ENCODE measurements at regions of chr6 and their contacts with region 1.

Region 1: DNA sequence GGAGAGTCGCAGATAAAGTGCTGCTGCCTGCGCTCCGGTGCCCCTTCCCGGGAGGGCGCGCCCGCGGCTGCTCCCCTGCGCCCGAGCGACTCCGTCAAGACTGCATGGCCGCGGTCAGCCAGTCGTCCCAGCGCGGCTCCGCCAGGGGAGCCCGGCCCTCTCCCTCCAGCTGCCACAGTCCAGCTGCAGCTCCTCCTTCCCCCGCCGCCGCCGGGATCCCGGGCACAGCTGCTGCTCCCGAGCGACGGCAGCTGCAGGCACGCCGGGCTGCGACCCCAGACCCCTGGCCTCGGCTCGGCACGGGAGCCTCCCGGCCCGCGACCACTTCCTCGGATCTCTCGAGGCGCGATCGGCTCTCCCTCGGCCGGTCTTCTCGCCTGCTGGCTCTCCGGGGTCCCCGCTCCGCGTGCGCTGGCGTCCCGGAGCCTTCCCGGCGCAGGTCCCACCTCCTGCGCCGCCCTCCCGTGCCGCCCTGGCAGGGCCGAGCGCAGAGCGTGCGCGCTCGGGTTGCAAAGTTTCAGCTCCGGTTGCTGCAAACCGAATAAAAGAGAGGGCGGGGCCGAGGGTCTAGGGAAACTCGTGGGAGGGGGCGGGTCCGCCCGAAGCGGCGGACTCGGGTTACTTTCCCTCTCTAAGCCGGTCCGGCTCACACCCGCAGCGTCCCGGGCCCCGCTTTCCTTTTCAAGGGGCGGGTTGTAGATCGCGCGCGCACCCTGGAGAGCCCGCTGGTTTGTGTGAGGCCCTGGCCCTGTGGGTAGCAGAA is at the start of gene CNKSR3:
- DNase-seq: peak; percentile 92 to 95
- H3K4me3 ChIP-seq: peak within 1 kb of the TSS; percentile 96
- H3K4me3 Mint-ChIP-seq: peak within 1 kb of the TSS; percentile 93
- H3K27ac Mint-ChIP-seq: peak within 1 kb of the TSS; percentile 86
- H3K4me1 ChIP-seq: peaks cover 42% of the 10 kb centered on the region
- H3K4me1 Mint-ChIP-seq: peaks cover 37% of the 10 kb centered on the region
- H3K27me3 ChIP-seq: no peaks in the 10 kb centered on the region
- H3K27me3 Mint-ChIP-seq: no peaks in the 10 kb centered on the region
- CTCF ChIP-seq: no peak
- total RNA-seq, gene CNKSR3: 31.8 and 33.1 TPM in 2 replicates

Region 2: GRCh38 chr6:154370545-154370944 is 139.8 kb before region 1 on chr6:
- CTCF ChIA-PET with region 1: no interaction called
- POLR2A ChIA-PET with region 1: no interaction called
- intact Hi-C with region 1: loop called (anchors 5 kb)
- DNase-seq: peak in 1 of 2 experiments; percentile 35
- H3K4me3 ChIP-seq: no peak overlapping the region
- H3K4me3 Mint-ChIP-seq: no peak overlapping the region
- H3K27ac Mint-ChIP-seq: no peak overlapping the region
- H3K4me1 ChIP-seq: peaks cover 22% of the 10 kb centered on the region
- H3K4me1 Mint-ChIP-seq: peaks cover 20% of the 10 kb centered on the region
- H3K27me3 ChIP-seq: no peaks in the 10 kb centered on the region
- H3K27me3 Mint-ChIP-seq: no peaks in the 10 kb centered on the region
- CTCF ChIP-seq: peak in 1 of 2 experiments; percentile 62

Region 3: GRCh38 chr6:154410619-154411072 is 99.7 kb before region 1 on chr6:
- CTCF ChIA-PET with region 1: no interaction called
- POLR2A ChIA-PET with region 1: no interaction called
- intact Hi-C with region 1: no loop called
- DNase-seq: no peak
- H3K4me3 ChIP-seq: no peak overlapping the region
- H3K4me3 Mint-ChIP-seq: no peak overlapping the region
- H3K27ac Mint-ChIP-seq: no peak overlapping the region
- H3K4me1 ChIP-seq: 0 out of 2 replicates have a peak, but pooled peaks cover 4% of the 10 kb centered on the region
- H3K4me1 Mint-ChIP-seq: no peaks in the 10 kb centered on the region
- H3K27me3 ChIP-seq: no peaks in the 10 kb centered on the region
- H3K27me3 Mint-ChIP-seq: no peaks in the 10 kb centered on the region
- CTCF ChIP-seq: no peak

Region 4: GRCh38 chr6:154537511-154538325 is 27.4 kb after region 1 on chr6:
- CTCF ChIA-PET with region 1: interaction called, 4 read pairs
- POLR2A ChIA-PET with region 1: interaction called, 4 read pairs
- intact Hi-C with region 1: loop called (anchors 1 kb)
- DNase-seq: peak; percentile 29 to 66
- H3K4me3 ChIP-seq: no peak overlapping the region
- H3K4me3 Mint-ChIP-seq: peak overlapping the region; percentile 30
- H3K27ac Mint-ChIP-seq: peak overlapping the region; percentile 21
- H3K4me1 ChIP-seq: peaks cover 22% of the 10 kb centered on the region
- H3K4me1 Mint-ChIP-seq: peaks cover 24% of the 10 kb centered on the region
- H3K27me3 ChIP-seq: no peaks in the 10 kb centered on the region
- H3K27me3 Mint-ChIP-seq: no peaks in the 10 kb centered on the region
- CTCF ChIP-seq: no peak

Region 5: DNA sequence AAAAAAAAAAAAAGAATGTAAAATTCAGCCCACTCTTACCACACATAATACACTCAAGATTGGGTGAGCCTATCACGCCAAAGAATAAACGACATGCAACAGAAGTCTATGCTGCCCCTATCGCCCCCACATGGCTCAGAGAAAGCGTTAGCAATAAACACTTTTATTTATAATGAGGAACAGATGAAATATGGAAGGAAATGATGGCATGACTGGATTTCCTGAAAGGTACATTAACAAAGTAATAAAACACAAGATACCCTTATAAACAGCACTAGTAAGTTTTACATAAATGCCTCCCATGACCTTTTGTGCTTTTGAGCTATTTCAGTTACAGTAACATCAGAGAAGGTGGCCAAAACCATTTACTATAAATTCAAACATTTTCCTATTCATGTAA is 151.4 kb after region 1 on chr6:
- CTCF ChIA-PET with region 1: interaction called, 3 read pairs
- POLR2A ChIA-PET with region 1: interaction called, 4 read pairs
- intact Hi-C with region 1: loop called (anchors 5 kb)
- DNase-seq: no peak
- H3K4me3 ChIP-seq: no peak overlapping the region
- H3K4me3 Mint-ChIP-seq: no peak overlapping the region
- H3K27ac Mint-ChIP-seq: no peak overlapping the region
- H3K4me1 ChIP-seq: no peaks in the 10 kb centered on the region
- H3K4me1 Mint-ChIP-seq: no peaks in the 10 kb centered on the region
- H3K27me3 ChIP-seq: no peaks in the 10 kb centered on the region
- H3K27me3 Mint-ChIP-seq: peaks cover 3% of the 10 kb centered on the region
- CTCF ChIP-seq: no peak